GM12878 (cell line): ENCODE measurements at regions of chr19 and their contacts with region 1.

Region 1: GRCh38 chr19:27974082-27974513 is 1238.9 kb downstream of the UQCRFS1 start:
- DNase-seq: peak; percentile 25
- ATAC-seq: peak; percentile 77
- H3K4me3 ChIP-seq: no peak overlapping the region
- H3K27ac ChIP-seq: no peak overlapping the region
- H3K4me1 ChIP-seq: no peaks in the 10 kb centered on the region
- H3K27me3 ChIP-seq: no peaks in the 10 kb centered on the region
- CTCF ChIP-seq: peak; percentile 49 to 58 (median 49); a peak in 5 of 6 replicates
- EP300 ChIP-seq: no peak
- POLR2A ChIP-seq: no peak
- RAD21 ChIP-seq: peak; percentile 83

Region 2: GRCh38 chr19:27815985-27816384 is 158.1 kb before region 1 on chr19:
- CTCF ChIA-PET with region 1: no interaction called
- POLR2A ChIA-PET with region 1: no interaction called
- RAD21 ChIA-PET with region 1: no interaction called
- SMC1A ChIA-PET with region 1: no interaction called
- in situ Hi-C with region 1: no loop called
- intact Hi-C with region 1: no loop called
- DNase-seq: no peak
- ATAC-seq: no peak
- H3K4me3 ChIP-seq: no peak overlapping the region
- H3K27ac ChIP-seq: no peak overlapping the region
- H3K4me1 ChIP-seq: no peaks in the 10 kb centered on the region
- H3K27me3 ChIP-seq: no peaks in the 10 kb centered on the region
- CTCF ChIP-seq: no peak
- EP300 ChIP-seq: no peak
- POLR2A ChIP-seq: no peak
- RAD21 ChIP-seq: no peak

Region 3: DNA sequence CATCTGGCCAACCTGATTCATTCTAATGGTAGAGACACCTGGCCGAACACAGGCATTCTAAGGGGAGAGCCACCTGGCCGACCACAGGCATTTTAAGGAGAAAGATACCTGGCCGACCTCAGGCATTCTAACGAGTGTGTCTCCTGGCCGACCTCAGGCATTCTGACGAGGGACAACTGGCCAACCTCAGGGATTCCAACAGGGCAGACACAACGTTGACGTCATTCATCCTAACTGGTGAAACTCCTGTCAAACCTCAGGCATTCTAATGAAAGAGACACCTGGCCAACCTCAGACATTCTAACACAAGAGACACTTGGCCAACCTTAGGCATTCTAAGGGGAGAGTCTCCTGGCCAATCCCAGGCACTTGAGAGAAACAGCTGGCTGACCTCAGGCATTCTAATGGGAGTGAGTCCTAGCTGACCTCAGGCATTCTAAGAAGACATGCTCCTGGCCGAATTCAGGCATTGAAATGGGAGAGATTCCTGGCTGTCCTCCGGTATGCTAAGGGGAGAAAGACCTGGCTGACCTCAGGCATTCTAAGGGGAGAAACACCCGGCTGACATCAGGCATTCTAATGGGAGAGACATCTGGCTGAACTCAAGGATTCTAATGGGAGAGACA is 113.7 kb before region 1 on chr19:
- CTCF ChIA-PET with region 1: no interaction called
- POLR2A ChIA-PET with region 1: no interaction called
- RAD21 ChIA-PET with region 1: no interaction called
- SMC1A ChIA-PET with region 1: no interaction called
- in situ Hi-C with region 1: no loop called
- intact Hi-C with region 1: no loop called
- DNase-seq: no peak
- ATAC-seq: no peak
- H3K4me3 ChIP-seq: no peak overlapping the region
- H3K27ac ChIP-seq: no peak overlapping the region
- H3K4me1 ChIP-seq: no peaks in the 10 kb centered on the region
- H3K27me3 ChIP-seq: no peaks in the 10 kb centered on the region
- CTCF ChIP-seq: no peak
- EP300 ChIP-seq: no peak
- POLR2A ChIP-seq: no peak
- RAD21 ChIP-seq: no peak

Region 4: DNA sequence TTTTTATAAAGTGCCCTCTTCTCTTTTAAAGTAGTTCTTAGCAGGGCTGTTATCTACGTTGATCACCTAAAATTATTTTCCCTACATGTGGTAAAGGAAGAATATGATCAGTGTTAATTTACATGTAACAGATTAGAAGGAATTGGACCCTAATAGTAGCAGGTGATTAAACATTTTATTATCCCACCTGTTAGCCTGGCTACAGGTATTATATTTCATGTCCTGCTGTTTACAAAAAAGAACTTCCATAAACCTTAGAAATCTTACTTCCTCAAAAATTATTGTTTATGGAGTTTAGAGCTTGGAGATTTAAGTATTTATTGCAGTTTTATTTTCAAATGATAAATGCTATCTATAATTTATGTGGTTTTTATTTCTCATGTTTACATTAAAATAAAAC is 12.2 kb after region 1 on chr19:
- CTCF ChIA-PET with region 1: interaction called, 8 read pairs
- POLR2A ChIA-PET with region 1: no interaction called
- RAD21 ChIA-PET with region 1: interaction called, 14 read pairs
- SMC1A ChIA-PET with region 1: interaction called, 28 read pairs
- in situ Hi-C with region 1: no loop called
- intact Hi-C with region 1: no loop called
- DNase-seq: no peak
- ATAC-seq: no peak
- H3K4me3 ChIP-seq: no peak overlapping the region
- H3K27ac ChIP-seq: no peak overlapping the region
- H3K4me1 ChIP-seq: no peaks in the 10 kb centered on the region
- H3K27me3 ChIP-seq: no peaks in the 10 kb centered on the region
- CTCF ChIP-seq: no peak
- EP300 ChIP-seq: no peak
- POLR2A ChIP-seq: no peak
- RAD21 ChIP-seq: no peak

Region 5: DNA sequence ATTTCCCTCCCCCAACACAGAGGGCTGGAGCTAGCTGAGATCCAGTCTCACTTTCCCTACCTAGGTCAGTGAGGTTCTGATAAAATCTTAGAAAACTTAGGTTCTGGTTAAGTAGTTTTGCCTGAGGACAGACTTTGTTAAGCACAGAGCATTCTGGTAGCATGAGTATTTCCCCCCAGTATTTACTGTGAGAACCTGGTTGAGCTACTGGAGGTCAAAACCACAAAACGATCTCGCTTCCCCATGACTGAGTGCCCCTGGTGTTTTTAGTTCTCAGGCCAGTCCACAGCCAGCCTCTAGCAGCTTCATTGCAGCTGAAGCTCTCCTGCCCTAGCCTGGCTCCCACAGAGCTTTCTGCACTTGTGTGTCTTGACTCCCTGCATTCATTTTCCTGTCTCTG is 100.6 kb after region 1 on chr19:
- CTCF ChIA-PET with region 1: interaction called, 12 read pairs
- POLR2A ChIA-PET with region 1: no interaction called
- RAD21 ChIA-PET with region 1: interaction called, 8 read pairs
- SMC1A ChIA-PET with region 1: interaction called, 6 read pairs
- in situ Hi-C with region 1: no loop called
- intact Hi-C with region 1: loop called (anchors 1 kb)
- DNase-seq: peak; percentile 75
- ATAC-seq: peak; percentile 80
- H3K4me3 ChIP-seq: no peak overlapping the region
- H3K27ac ChIP-seq: peak overlapping the region; percentile 69
- H3K4me1 ChIP-seq: peaks cover 3% of the 10 kb centered on the region
- H3K27me3 ChIP-seq: no peaks in the 10 kb centered on the region
- CTCF ChIP-seq: no peak
- EP300 ChIP-seq: no peak
- POLR2A ChIP-seq: no peak
- RAD21 ChIP-seq: 0 out of 2 replicates have a peak, but pooled peaks have one; percentile 12

Region 6: GRCh38 chr19:28213470-28214082 is 239.5 kb after region 1 on chr19:
- CTCF ChIA-PET with region 1: interaction called, 29 read pairs
- POLR2A ChIA-PET with region 1: interaction called, 3 read pairs
- RAD21 ChIA-PET with region 1: interaction called, 10 read pairs
- SMC1A ChIA-PET with region 1: interaction called, 19 read pairs
- in situ Hi-C with region 1: no loop called
- intact Hi-C with region 1: no loop called
- DNase-seq: no peak
- ATAC-seq: no peak
- H3K4me3 ChIP-seq: no peak overlapping the region
- H3K27ac ChIP-seq: no peak overlapping the region
- H3K4me1 ChIP-seq: no peaks in the 10 kb centered on the region
- H3K27me3 ChIP-seq: no peaks in the 10 kb centered on the region
- CTCF ChIP-seq: no peak
- EP300 ChIP-seq: no peak
- POLR2A ChIP-seq: no peak
- RAD21 ChIP-seq: no peak

Region 7: DNA sequence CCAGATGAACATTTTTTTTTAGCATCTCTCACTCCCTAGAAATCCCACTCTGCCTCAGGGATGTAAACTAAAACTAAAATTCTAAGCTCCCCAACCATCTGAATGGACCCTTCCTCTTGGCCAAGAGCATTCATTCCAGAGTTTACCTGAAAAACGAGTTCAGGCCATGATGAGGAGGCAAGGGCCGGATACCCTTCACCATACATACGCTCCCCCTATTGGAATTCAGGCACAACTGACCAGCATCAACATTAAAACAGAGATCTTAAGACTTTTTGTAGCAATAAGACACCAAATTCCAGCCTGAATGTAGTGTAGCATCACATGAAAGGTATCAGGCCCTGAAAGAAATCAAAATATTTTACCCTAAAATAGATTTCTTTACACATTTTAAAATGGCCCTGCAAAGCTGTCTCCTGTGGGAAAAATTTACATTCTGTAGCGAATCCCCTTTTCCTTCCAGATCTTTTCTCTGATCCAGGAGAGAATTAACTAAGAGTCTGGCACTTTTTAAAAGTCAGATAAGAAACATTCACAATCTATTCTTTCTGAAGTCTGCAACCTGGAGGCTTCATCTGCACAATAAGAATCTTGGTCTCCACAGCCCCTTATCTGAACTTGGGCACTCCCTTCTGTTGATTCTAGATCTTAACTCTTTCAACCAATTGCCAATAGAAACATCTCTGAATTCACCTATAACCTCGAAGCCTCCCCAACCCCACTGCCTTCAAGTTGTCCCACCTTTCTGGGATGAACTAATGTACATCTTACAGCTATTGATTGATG is 350.4 kb after region 1 on chr19:
- CTCF ChIA-PET with region 1: interaction called, 91 read pairs
- POLR2A ChIA-PET with region 1: no interaction called
- RAD21 ChIA-PET with region 1: interaction called, 48 read pairs
- SMC1A ChIA-PET with region 1: interaction called, 88 read pairs
- in situ Hi-C with region 1: loop called (anchors 5 kb)
- intact Hi-C with region 1: loop called (anchors 1 kb)
- DNase-seq: no peak
- ATAC-seq: no peak
- H3K4me3 ChIP-seq: no peak overlapping the region
- H3K27ac ChIP-seq: no peak overlapping the region
- H3K4me1 ChIP-seq: no peaks in the 10 kb centered on the region
- H3K27me3 ChIP-seq: no peaks in the 10 kb centered on the region
- CTCF ChIP-seq: no peak
- EP300 ChIP-seq: no peak
- POLR2A ChIP-seq: no peak
- RAD21 ChIP-seq: no peak